ENCODE measurements at regions of chr6 and their contacts with region 1.

Region 1: DNA sequence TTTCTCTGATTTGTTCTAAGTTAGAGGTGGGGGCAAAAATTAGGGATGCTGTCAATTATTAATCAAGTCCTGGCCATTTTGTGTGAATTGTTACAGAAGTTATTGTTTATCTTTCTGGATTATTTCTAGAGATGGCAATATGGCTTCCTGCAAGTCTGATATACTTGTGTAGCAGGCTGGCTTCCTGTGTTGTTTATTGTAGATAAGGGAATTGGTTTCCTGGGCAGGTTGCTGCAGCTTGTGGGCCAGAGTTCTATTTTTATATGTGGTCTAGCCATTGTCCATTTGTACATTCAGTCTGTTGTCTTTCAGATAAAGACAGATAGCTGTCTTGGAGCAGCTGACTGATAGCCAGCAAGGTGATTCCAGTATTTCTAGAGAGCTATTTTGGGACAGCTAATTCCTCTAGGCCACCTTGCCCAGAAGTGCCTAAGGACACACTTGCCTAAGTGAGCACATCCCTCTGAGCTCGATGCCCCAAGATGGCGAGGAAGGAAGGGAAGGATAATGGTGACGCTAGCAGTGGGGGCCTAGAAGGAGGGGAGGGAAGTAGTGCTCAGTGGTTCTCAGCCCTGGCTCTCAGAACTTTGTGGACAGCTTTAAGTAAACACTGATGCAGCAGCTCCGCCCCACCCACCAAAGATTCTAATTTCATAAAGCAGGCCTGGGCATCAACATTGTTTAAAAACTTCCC is 25.5 kb downstream of the DDO start:
- DNase-seq: no peak
- H3K4me3 Mint-ChIP-seq: no peak overlapping the region
- H3K27ac Mint-ChIP-seq: no peak overlapping the region
- H3K4me1 Mint-ChIP-seq: peaks cover 2% of the 10 kb centered on the region
- H3K27me3 Mint-ChIP-seq: no peaks in the 10 kb centered on the region

Region 2: GRCh38 chr6:109526905-109527628 is 862.8 kb before region 1 on chr6:
- CTCF ChIA-PET with region 1: interaction called, 3 read pairs
- POLR2A ChIA-PET with region 1: no interaction called
- intact Hi-C with region 1: loop called (anchors 2 kb)
- DNase-seq: peak; percentile 45
- H3K4me3 Mint-ChIP-seq: no peak overlapping the region
- H3K27ac Mint-ChIP-seq: no peak overlapping the region
- H3K4me1 Mint-ChIP-seq: no peaks in the 10 kb centered on the region
- H3K27me3 Mint-ChIP-seq: no peaks in the 10 kb centered on the region

Region 3: DNA sequence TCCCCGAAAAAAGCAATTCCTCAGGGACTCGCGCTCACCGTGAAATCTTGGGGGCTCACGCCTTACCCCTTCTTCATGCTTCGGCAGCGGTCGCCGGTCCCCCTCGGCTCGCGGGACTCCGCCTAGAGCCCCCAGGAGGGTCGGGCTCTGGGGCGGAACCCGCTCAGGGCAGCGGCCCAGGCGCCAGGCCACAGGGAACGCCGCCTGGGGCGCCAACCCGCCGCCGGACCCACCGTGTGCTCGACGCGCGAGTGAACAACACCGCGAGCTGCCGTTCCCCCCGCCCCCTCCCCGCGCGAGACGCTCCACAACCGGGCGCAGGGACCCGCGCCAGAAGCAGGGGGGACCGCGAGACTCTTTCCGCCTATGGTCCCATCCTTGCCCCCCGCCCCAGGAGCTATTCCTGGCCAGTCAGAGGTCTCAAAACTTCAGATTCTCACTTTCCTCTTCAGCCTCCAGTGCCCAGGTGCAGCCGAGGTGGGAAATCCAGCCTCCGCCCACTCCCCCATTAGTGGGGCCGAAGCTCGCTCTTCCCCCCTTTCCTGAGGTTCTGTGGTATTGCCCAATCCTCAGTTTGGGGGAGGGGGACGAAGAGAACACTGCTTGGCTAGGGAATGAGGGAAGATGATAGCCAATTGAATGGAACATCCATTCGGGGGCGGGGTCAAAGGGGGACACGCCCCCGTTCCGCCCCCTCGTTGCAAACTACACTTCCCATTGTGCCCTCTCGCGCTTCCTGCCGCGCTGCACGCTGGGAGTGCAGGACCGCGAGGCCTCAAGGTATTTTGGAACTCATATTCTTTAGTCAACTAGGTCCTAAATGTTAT is 210.2 kb before region 1 on chr6 and contains the start of gene WASF1:
- CTCF ChIA-PET with region 1: interaction called, 9 read pairs
- POLR2A ChIA-PET with region 1: no interaction called
- intact Hi-C with region 1: loop called (anchors 1 kb)
- DNase-seq: peak; percentile 94
- H3K4me3 Mint-ChIP-seq: peak within 1 kb of the TSS; percentile 85
- H3K27ac Mint-ChIP-seq: no peak within 1 kb of the TSS
- H3K4me1 Mint-ChIP-seq: peaks cover 5% of the 10 kb centered on the region
- H3K27me3 Mint-ChIP-seq: peaks cover 10% of the 10 kb centered on the region
- total RNA-seq, gene WASF1: 1.9 to 2.6 TPM